AG04450 (cell line): ENCODE measurements at regions of chr16 and their contacts with region 1.

Region 1: DNA sequence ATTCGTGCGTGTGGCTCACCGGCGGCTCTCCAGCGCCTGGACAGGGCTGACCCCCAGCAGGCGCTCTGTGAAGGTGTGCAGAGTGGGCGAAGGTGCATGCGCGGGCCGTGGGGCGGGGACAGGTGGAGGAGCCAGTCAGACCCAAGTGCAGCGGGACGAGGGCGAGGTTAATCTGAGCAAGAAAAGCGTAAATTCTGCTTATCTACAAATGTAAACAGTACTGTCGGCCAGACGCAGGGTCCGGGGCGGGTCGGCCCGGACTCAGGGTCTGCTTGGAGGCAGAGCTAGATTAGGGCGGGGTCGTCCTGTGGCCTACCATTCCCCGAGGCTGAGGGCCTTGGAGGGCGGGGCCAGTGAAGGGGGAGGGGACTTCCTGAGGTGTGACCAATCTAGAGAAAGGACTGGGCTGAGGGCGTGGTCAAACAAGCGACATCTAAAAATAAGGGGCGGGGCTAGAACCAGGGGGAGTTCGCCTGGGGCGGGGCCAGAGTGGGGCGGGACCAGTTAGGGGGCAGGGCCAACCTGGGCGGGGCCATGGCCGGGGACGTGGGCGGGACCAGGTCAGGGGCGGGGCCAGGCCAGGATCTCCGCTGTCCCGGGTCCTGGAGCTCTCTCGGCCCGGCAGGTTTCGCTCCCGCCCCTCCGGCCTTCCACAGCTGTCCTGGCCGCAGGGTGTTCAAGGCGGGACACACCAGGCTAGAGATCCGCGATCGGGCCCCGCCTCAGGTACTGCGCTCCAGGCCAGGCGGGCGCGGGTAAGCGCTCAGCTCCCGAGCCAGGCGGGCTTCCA is at the start of gene SEC14L5:
- DNase-seq: peak; percentile 97
- H3K4me3 ChIP-seq: peak within 1 kb of the TSS; percentile 65
- H3K27ac ChIP-seq: no peak within 1 kb of the TSS
- H3K27me3 ChIP-seq: peaks cover 15% of the 10 kb centered on the region
- CTCF ChIP-seq: no peak
- polyA plus RNA-seq, gene SEC14L5: 0.05 and 0.06 TPM in 2 replicates

Region 2: GRCh38 chr16:4766874-4767628 is 190.9 kb before region 1 on chr16 and contains the start of gene ZNF500:
- CTCF ChIA-PET with region 1: interaction called, 13 read pairs
- POLR2A ChIA-PET with region 1: interaction called, 3 read pairs
- DNase-seq: peak; percentile 89
- H3K4me3 ChIP-seq: peak within 1 kb of the TSS; percentile 82
- H3K27ac ChIP-seq: peak within 1 kb of the TSS; percentile 70
- H3K27me3 ChIP-seq: no peaks in the 10 kb centered on the region
- CTCF ChIP-seq: no peak
- polyA plus RNA-seq, gene ZNF500: 3.1 and 4.2 TPM in 2 replicates

Region 3: GRCh38 chr16:4846891-4847773 is 110.8 kb before region 1 on chr16 and contains the starts of genes GLYR1 and UBN1:
- CTCF ChIA-PET with region 1: interaction called, 18 read pairs
- POLR2A ChIA-PET with region 1: interaction called, 3 read pairs
- DNase-seq: peak; percentile 82
- H3K4me3 ChIP-seq: peak within 1 kb of the TSS; percentile 88
- H3K27ac ChIP-seq: peak within 1 kb of the TSS; percentile 73
- H3K27me3 ChIP-seq: no peaks in the 10 kb centered on the region
- CTCF ChIP-seq: no peak
- polyA plus RNA-seq, gene GLYR1: 44.2 and 46.3 TPM in 2 replicates
- polyA plus RNA-seq, gene UBN1: 11.2 TPM in 2 replicates

Region 4: GRCh38 chr16:4852207-4852872 is 105.6 kb before region 1 on chr16:
- CTCF ChIA-PET with region 1: interaction called, 18 read pairs
- POLR2A ChIA-PET with region 1: interaction called, 10 read pairs
- DNase-seq: no peak
- H3K4me3 ChIP-seq: no peak overlapping the region
- H3K27ac ChIP-seq: no peak overlapping the region
- H3K27me3 ChIP-seq: no peaks in the 10 kb centered on the region
- CTCF ChIP-seq: no peak

Region 5: DNA sequence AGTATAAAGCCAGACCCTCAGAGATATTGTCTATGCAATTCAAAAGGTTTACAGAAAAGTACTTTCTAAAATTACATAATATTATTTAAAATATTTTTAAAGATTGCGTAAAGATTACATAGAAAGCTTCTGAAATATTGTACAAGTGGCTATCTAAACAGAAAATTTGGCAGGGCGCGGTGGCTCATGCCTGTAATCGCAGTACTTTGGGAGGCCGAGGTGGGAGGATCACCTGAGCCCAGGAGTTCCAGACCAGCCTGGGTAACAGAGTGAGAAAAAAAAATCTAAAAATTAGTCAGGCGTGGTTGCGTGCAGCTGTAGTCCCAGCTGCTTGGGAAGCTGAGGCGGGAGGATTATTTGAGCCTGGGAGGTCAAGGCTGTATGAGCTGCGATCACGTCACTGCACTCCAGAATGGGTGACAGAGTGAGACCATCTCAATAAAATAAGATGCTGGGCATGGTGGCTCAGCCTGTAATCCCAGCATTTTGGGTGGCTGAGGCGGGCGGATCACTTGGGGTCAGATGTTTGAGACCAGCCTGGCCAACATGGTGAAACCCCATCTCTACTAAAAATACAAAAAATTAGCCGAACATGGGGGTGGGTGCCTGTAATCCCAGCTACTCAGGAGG is 92.6 kb before region 1 on chr16:
- CTCF ChIA-PET with region 1: interaction called, 13 read pairs
- POLR2A ChIA-PET with region 1: no interaction called
- DNase-seq: no peak
- H3K4me3 ChIP-seq: no peak overlapping the region
- H3K27ac ChIP-seq: no peak overlapping the region
- H3K27me3 ChIP-seq: no peaks in the 10 kb centered on the region
- CTCF ChIP-seq: no peak

Region 6: GRCh38 chr16:4882633-4883285 is 75.2 kb before region 1 on chr16:
- CTCF ChIA-PET with region 1: interaction called, 13 read pairs
- POLR2A ChIA-PET with region 1: no interaction called
- DNase-seq: no peak
- H3K4me3 ChIP-seq: no peak overlapping the region
- H3K27ac ChIP-seq: no peak overlapping the region
- H3K27me3 ChIP-seq: no peaks in the 10 kb centered on the region
- CTCF ChIP-seq: no peak